ENCODE measurements at regions of chr9 and their contacts with region 1.

Region 1: DNA sequence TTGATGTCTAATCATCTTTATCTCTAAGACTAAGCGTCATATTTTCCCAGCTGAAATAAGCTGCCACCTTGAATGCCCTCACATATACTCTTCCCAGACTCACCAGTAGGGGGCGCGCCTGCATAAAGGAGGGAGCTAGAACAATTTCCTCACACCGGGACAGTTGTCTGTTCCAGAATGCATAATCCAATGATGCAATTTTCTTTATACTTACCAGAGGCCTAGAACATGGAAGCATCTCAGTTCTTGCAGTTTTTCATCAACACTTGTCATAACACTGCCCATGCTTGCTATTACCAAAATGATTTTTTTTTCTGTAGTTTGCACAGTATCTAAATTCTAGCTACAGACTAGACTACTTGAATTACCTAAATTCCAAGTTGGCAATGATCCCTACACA is 203.9 kb downstream of the FRMD3 start:
- DNase-seq: peak; percentile 49
- H3K4me3 Mint-ChIP-seq: no peak overlapping the region
- H3K27ac Mint-ChIP-seq: no peak overlapping the region
- H3K4me1 Mint-ChIP-seq: no peaks in the 10 kb centered on the region
- H3K27me3 Mint-ChIP-seq: no peaks in the 10 kb centered on the region

Region 2: DNA sequence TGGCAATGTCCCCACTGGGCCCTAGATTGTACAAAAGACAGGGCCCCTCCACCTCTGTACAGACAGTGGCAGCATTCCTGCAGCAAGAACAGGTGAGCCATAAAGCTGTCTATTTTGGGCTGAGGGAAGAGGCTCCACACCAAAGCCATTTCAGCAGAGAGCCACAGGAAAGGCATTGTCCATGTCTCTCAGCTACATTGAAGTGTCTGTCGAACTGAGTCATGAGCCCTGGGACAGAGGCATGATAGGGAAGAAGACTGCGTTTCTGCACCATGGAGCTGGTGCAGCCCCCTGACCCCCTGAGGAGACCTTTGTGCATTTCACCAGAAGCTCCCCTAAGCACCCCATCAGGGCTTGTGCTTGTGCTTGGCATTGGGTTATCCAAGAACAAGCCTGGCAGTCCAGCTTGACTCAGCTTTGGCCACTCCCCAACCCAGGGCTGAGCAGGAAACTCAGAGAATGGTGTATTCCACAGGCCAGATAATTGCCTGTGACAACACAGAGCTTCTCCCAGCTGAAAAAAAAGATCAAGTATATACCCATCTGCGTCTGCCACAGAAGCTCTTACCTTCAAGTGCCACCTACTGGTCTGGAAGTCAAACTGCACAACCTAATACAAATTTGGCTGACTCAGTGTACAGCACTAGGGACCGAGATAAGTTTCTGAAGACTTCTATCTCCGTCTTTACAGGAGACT is 209.8 kb after region 1 on chr9:
- intact Hi-C with region 1: loop called (anchors 1 kb)
- DNase-seq: no peak
- H3K4me3 Mint-ChIP-seq: no peak overlapping the region
- H3K27ac Mint-ChIP-seq: no peak overlapping the region
- H3K4me1 Mint-ChIP-seq: no peaks in the 10 kb centered on the region
- H3K27me3 Mint-ChIP-seq: peaks cover 24% of the 10 kb centered on the region

Region 3: DNA sequence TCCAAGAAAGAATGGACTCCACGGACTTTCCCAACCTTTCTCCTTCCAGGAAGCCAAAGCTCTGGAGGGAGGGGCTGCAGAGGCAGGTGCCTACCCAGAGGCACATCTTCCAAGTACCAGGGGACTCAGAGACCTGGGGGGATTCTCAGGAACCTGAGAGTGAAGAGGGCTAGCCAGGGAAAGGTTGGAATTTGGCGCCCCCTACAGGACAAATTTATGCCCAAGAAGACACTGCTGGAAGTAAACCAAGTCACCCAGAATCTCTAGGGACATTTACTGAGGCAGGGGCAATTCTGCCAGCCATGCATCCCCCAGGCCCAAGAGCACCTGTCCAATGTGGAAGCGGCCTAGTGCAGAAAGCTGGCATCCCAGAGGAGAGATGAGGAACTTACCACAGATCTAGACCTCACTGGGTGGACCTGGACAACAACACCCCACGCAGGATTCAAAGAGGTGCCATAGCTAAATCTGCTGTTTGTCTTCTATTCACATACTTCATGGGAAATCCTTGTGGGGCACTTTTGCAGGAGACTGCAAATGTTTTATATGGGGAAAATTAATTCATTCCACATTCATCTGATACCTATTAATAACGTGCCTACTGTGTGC is 262.7 kb after region 1 on chr9:
- intact Hi-C with region 1: loop called (anchors 1 kb)
- DNase-seq: no peak
- H3K4me3 Mint-ChIP-seq: no peak overlapping the region
- H3K27ac Mint-ChIP-seq: no peak overlapping the region
- H3K4me1 Mint-ChIP-seq: no peaks in the 10 kb centered on the region
- H3K27me3 Mint-ChIP-seq: peaks cover 3% of the 10 kb centered on the region